PC-9 (cell line): ENCODE measurements at regions of chr1 and their contacts with region 1.

Region 1: GRCh38 chr1:185720633-185721272 is 13.4 kb upstream of the HMCN1 start:
- DNase-seq: peak in 1 of 2 experiments; percentile 37
- H3K4me3 ChIP-seq: no peak overlapping the region
- H3K27ac ChIP-seq: no peak overlapping the region
- H3K4me1 ChIP-seq: no peaks in the 10 kb centered on the region
- H3K27me3 ChIP-seq: no peaks in the 10 kb centered on the region
- CTCF ChIP-seq: peak; percentile 76

Region 2: GRCh38 chr1:185733818-185734771 is 13.3 kb after region 1 on chr1 and contains the start of gene HMCN1:
- CTCF ChIA-PET with region 1: interaction called, 11 read pairs
- POLR2A ChIA-PET with region 1: no interaction called
- intact Hi-C with region 1: no loop called
- DNase-seq: peak in 1 of 2 experiments; percentile 39
- H3K4me3 ChIP-seq: peak within 1 kb of the TSS; percentile 79
- H3K27ac ChIP-seq: no peak within 1 kb of the TSS
- H3K4me1 ChIP-seq: peaks cover 14% of the 10 kb centered on the region
- H3K27me3 ChIP-seq: no peaks in the 10 kb centered on the region
- CTCF ChIP-seq: no peak; the same call in 1 of the 2 replicates
- total RNA-seq, gene HMCN1: 0.31 and 0.83 TPM in 2 replicates

Region 3: GRCh38 chr1:185813401-185813979 is 92.7 kb after region 1 on chr1:
- CTCF ChIA-PET with region 1: interaction called, 5 read pairs
- POLR2A ChIA-PET with region 1: no interaction called
- intact Hi-C with region 1: loop called (anchors 5 kb)
- DNase-seq: peak in 1 of 2 experiments; percentile 50
- H3K4me3 ChIP-seq: no peak overlapping the region
- H3K27ac ChIP-seq: no peak overlapping the region
- H3K4me1 ChIP-seq: no peaks in the 10 kb centered on the region
- H3K27me3 ChIP-seq: no peaks in the 10 kb centered on the region
- CTCF ChIP-seq: peak; percentile 85

Region 4: DNA sequence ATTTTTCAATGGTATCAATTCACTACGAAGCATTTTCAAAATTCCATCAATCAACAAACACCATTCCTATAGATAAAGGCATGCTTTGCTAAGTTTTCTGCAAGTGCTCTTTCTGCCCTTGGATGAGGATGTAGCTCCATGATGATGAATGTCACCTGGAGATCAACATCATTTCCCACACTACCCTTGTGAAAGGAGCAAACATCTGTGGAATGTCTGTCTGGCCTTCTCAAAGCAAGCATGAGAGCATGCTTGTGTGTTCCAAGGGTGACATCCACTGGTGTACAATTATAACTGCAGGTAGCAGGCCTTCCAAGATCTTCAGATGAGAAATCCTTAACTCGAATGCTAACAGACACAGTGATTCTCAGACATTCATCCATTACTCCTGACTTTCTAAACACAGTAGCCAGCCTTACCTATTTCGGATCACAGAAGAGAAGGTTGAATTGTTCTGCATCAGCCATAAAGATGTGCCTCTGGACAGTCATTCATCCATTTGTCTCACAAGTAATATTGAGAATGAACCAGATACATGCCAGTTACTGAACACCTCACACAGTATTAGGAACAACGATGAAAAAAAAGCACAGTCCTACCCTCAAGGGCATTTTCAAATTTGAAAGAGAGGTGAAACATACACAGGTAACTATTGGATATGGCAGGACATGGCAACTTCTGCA is 491.9 kb after region 1 on chr1:
- CTCF ChIA-PET with region 1: interaction called, 9 read pairs
- POLR2A ChIA-PET with region 1: no interaction called
- intact Hi-C with region 1: loop called (anchors 1 kb)
- DNase-seq: peak; percentile 55 to 82
- H3K4me3 ChIP-seq: no peak overlapping the region
- H3K27ac ChIP-seq: no peak overlapping the region
- H3K4me1 ChIP-seq: no peaks in the 10 kb centered on the region
- H3K27me3 ChIP-seq: no peaks in the 10 kb centered on the region
- CTCF ChIP-seq: peak; percentile 93